ENCODE measurements at regions of chr12 and their contacts with region 1.

Region 1: DNA sequence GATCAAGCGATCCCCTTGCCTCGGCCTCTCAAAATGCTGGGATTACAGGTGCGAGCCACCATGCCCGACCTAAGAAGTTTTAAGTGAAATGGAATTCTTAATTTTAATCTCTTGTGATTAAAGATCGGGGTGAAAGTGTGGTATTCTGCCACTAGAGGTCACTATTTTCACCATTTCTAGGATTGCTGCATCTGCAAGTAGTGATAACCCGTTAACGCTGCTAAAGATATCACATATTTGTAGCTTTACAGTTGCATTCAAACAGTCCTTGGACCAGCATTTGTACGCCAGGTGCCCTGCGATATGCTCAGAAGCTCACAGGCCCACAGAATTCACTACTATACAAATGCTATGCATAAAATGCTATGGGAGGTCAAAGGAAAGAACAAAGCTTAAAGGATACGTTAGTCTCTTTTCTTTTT is 19.3 kb downstream of the CCDC62 start:
- DNase-seq: peak; percentile 41
- ATAC-seq: peak; percentile 61
- H3K4me3 Mint-ChIP-seq: no peak overlapping the region
- H3K27ac Mint-ChIP-seq: no peak overlapping the region
- H3K4me1 Mint-ChIP-seq: no peaks in the 10 kb centered on the region
- H3K27me3 Mint-ChIP-seq: no peaks in the 10 kb centered on the region

Region 2: DNA sequence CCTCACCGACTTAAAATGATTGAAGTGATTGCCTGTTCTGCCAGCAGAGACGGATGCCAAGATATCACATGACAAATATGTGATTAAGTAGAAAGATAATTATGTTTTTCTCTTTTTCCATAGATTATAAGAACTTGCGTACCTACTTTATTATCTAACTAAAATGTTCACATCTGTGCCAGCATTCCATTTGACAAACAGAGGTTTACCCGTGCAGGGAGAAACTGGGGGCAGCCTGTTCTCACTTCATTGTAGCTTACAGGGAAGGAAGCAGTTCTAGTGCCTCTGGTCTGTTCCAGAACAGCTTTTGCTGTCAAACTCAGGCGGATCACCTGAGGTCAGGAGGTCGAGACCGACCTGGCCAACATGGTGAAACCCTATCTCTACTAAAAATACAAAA is 10.2 kb after region 1 on chr12:
- CTCF ChIA-PET with region 1: interaction called, 23 read pairs
- POLR2A ChIA-PET with region 1: no interaction called
- DNase-seq: no peak
- ATAC-seq: no peak
- H3K4me3 Mint-ChIP-seq: no peak overlapping the region
- H3K27ac Mint-ChIP-seq: no peak overlapping the region
- H3K4me1 Mint-ChIP-seq: peaks cover 7% of the 10 kb centered on the region
- H3K27me3 Mint-ChIP-seq: no peaks in the 10 kb centered on the region

Region 3: DNA sequence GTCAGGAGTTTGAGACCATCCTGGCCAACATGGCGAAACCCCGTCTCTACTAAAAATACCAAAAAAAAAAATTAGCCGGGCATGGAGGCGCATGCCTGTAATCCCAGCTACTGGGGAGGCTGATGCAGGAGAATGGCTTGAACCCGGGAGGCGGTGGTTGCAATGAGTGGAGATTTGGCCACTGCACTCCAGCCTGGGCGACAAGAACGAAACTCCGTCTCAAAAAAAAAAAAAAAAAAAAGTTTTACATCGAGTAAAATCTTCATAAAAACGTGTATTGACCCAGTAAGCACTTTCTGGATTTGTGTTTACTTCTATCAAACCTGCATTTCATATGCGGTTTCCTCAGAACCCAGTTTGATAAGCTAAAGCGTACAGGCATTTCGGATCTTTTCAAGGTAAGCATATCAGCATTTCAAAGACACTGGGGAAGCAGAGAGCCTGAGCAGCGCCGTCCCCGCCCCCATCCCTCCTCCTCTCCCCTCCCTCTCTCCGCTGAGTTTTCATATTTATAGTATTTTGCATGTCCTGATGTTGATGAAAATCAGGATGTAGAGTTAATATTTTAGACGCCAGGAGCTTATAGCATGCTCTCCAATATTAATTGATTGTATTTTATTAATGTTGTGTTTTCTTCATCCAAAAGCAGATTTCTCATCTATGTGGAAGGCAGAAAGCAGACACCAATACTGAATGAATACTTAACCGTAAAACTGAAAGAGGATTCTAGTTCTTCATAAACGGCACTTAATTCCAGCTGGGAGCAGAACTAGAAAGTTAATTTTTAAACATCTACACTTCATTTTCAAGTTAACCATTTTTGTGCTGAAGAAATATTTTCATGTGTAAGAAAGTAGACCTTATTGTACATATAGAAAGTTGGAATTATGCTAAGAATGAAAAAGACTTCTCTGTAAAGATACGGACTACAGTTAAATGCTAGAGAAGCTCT is 32.4 kb after region 1 on chr12:
- CTCF ChIA-PET with region 1: interaction called, 21 read pairs
- POLR2A ChIA-PET with region 1: no interaction called
- DNase-seq: no peak
- ATAC-seq: no peak
- H3K4me3 Mint-ChIP-seq: no peak overlapping the region
- H3K27ac Mint-ChIP-seq: no peak overlapping the region
- H3K4me1 Mint-ChIP-seq: peaks cover 2% of the 10 kb centered on the region
- H3K27me3 Mint-ChIP-seq: peaks cover 12% of the 10 kb centered on the region

Region 4: GRCh38 chr12:122834104-122834920 is 40.6 kb after region 1 on chr12:
- CTCF ChIA-PET with region 1: interaction called, 25 read pairs
- POLR2A ChIA-PET with region 1: no interaction called
- DNase-seq: peak; percentile 38
- ATAC-seq: peak; percentile 32
- H3K4me3 Mint-ChIP-seq: peak overlapping the region; percentile 84
- H3K27ac Mint-ChIP-seq: peak overlapping the region; percentile 84
- H3K4me1 Mint-ChIP-seq: peaks cover 32% of the 10 kb centered on the region
- H3K27me3 Mint-ChIP-seq: peaks cover 16% of the 10 kb centered on the region

Region 5: DNA sequence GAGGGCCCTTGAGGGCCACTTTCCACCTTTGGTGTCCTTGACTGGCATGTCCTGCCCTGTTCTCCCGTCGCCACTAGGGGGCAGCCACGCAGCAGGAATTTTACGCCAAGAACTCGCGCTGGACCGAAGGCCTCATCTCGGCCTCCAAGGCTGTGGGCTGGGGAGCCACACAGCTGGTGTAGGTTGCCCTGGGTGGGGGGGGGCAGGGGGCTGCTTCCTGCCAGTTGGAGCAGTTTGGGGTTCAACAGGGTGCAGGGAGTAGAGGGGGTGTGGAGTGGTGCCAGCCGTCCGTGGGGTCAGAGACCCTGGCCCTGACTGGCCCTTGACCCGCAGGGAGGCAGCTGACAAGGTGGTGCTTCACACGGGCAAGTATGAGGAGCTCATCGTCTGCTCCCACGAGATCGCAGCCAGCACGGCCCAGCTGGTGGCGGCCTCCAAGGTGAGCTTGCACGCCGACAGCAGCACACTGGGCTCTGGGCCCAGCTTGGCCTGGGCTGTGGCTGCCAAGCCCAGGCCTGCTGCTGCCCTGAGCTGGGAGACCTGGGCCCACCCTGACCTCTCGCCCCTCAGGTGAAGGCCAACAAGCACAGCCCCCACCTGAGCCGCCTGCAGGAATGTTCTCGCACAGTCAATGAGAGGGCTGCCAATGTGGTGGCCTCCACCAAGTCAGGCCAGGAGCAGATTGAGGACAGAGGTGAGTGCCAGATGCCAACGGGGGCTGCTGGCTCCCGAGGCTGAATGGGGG is 66.8 kb after region 1 on chr12:
- CTCF ChIA-PET with region 1: interaction called, 20 read pairs
- POLR2A ChIA-PET with region 1: no interaction called
- DNase-seq: peak; percentile 87
- ATAC-seq: peak; percentile 74
- H3K4me3 Mint-ChIP-seq: no peak overlapping the region
- H3K27ac Mint-ChIP-seq: peak overlapping the region; percentile 25
- H3K4me1 Mint-ChIP-seq: peaks cover 7% of the 10 kb centered on the region
- H3K27me3 Mint-ChIP-seq: no peaks in the 10 kb centered on the region

Region 6: DNA sequence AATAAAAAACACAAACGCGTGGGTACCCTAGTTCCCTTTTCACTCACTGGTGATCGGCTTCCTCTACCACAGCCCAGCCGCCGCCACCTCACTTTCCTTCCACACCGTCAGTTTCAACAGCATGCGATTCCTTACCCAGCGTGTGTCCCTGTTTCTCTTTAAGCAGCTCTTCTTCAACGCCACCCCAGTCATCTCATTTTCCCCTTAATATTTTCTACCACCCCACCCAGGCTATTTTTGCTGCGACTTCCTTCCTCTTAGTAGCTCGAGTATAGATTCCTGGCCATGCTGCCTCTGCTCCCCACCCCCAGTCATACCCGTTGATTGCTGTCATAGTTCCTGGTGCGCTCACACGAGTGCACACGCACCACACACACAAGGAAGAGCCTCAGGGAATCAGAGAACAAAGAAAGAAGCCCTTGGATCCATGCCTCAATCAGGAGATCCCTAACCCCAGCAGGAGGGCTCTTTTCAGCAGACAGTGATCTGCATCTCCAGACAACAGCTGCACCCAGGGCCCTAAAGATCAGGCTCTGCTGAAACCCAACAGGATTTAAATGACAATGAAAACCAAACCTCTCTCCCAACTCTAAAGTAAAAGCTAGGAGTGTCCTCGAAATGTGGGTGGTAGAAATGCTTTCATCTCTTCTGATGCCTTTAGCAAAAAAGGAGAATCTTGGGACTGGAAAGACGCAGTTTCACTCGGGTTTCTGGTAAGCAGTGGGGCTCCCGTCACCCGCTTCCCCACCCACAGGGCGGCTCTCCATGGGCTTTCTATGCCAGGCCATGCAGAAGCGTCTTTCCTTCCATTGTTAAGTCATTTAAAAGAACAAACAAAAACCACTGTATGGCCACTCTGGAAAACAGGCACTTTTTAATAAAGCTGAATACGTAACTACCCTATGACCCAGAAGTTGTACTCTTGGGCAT is 78.4 kb after region 1 on chr12:
- CTCF ChIA-PET with region 1: interaction called, 15 read pairs
- POLR2A ChIA-PET with region 1: no interaction called
- DNase-seq: peak; percentile 66
- ATAC-seq: peak; percentile 59
- H3K4me3 Mint-ChIP-seq: peak overlapping the region; percentile 65
- H3K27ac Mint-ChIP-seq: peak overlapping the region; percentile 81
- H3K4me1 Mint-ChIP-seq: peaks cover 64% of the 10 kb centered on the region
- H3K27me3 Mint-ChIP-seq: no peaks in the 10 kb centered on the region

Region 7: DNA sequence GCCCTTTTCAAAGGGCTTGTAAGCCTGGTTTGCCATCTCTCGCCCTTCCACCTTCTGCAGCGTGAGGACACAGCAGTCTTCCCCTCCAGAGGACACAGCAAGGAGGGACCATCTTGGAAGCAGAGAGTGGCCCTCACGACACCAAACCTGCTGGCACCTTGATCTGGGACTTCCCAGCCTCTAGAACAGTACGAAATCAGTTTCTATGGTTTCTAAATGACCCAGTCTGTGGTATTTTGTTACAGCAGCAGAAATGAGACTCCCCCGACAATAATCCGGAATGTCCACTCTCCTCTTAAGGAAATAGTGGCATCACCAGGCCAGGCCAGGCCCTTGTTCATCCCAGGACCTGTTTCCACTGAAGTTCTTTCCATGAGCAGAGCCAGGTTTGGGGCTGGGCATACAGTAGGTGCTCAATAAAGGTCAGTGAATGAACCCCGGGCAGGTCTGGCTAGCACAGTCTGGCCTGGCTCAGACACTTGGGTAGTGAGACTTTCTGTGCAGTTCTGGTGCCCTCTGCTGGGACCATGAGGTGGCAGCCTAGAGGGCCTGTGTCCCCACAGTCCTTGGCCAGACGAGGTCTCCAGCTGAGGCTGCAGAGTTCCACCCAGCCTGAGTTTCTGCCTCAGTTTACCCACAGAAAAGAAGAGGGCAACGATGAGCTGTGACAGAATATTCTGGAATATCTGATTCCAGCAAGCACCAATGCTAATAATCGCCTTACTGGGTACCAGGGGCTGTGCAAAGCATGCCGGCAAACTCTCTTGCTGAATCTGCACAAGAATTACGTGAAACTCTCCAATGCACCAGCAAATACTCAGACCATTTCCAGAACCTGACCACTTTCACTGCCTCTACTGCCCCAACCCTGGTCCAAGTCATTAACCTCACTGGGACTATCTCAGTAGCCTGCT is 158.5 kb after region 1 on chr12:
- CTCF ChIA-PET with region 1: interaction called, 23 read pairs
- POLR2A ChIA-PET with region 1: no interaction called
- DNase-seq: peak; percentile 83
- ATAC-seq: peak; percentile 98
- H3K4me3 Mint-ChIP-seq: no peak overlapping the region
- H3K27ac Mint-ChIP-seq: no peak overlapping the region
- H3K4me1 Mint-ChIP-seq: peaks cover 14% of the 10 kb centered on the region
- H3K27me3 Mint-ChIP-seq: no peaks in the 10 kb centered on the region

Measured in activated CD8-positive, alpha-beta T cell treated with anti-CD3 and anti-CD28 coated beads, Interleukin-2, amount 10 ng/mL, durations not matched to agents 7 days and 5 days (primary cell).